WTC11 (cell line): ENCODE measurements at regions of chr22 and their contacts with region 1.

Region 1: DNA sequence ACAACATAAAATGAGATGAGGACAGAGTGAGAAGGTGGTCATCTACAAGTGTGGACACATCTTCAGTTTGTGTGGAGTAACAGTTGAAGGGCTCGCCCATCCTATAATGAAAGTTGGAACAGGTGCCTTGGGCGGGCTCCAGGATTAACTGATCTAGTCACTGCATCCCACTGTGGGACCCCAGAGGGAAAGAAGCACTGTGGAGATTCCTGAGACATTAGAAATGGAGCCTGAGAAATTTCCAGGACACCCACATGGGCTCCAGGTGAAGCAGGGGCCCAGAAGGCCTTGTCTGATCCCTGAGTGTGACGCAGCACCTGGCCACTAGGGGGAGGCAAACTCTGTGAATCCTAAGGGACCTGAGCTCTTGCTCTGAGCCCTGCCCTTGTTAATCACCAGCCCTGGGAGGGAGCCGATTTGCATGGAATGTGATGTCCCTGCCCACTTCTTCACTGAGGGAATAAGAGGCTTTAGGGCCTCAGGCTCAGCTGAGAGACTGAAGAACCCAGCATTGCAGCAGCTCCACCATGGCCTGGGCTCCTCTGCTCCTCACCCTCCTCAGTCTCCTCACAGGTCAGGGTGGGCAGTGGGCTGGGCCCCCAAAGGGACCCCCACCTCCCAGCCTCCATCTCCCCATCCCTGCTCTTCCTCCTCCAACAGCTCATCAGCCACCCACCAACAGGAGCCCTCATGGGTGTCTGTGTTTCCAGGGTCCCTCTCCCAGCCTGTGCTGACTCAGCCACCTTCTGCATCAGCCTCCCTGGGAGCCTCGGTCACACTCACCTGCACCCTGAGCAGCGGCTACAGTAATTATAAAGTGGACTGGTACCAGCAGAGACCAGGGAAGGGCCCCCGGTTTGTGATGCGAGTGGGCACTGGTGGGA is 98.4 kb downstream of the VPREB1 start:
- DNase-seq: peak; percentile 98
- ATAC-seq: peak; percentile 99
- H3K4me3 Mint-ChIP-seq: no peak overlapping the region
- H3K27ac Mint-ChIP-seq: no peak overlapping the region
- H3K4me1 Mint-ChIP-seq: peaks cover 4% of the 10 kb centered on the region
- H3K27me3 Mint-ChIP-seq: peaks cover 100% of the 10 kb centered on the region
- CTCF ChIP-seq: peak; percentile 87

Region 2: DNA sequence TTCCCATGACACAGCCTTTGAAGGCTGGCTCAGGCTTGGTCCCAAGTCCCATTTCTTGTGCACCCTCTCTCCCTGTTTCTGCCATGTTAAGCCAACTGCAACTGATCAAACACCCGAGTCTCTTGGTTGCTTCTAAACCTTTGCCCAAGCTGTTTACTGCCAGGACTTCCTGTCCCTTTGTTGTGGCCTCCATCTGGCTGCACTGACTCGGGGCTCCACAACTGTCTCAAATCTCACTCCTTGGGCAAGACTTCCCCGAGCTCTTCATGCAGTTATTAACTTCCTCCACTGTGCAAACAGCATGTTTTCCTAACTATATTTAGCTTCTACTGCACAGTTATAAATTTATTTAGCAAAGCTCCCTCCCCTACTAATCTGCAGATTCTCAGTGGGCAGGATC is 94.1 kb before region 1 on chr22:
- CTCF ChIA-PET with region 1: no interaction called
- POLR2A ChIA-PET with region 1: no interaction called
- DNase-seq: no peak
- ATAC-seq: no peak
- H3K4me3 Mint-ChIP-seq: no peak overlapping the region
- H3K27ac Mint-ChIP-seq: no peak overlapping the region
- H3K4me1 Mint-ChIP-seq: no peaks in the 10 kb centered on the region
- H3K27me3 Mint-ChIP-seq: peaks cover 74% of the 10 kb centered on the region
- CTCF ChIP-seq: no peak

Region 3: GRCh38 chr22:22318723-22319465 is 24.0 kb before region 1 on chr22:
- CTCF ChIA-PET with region 1: interaction called, 18 read pairs
- POLR2A ChIA-PET with region 1: interaction called, 3 read pairs
- DNase-seq: no peak
- ATAC-seq: no peak
- H3K4me3 Mint-ChIP-seq: no peak overlapping the region
- H3K27ac Mint-ChIP-seq: no peak overlapping the region
- H3K4me1 Mint-ChIP-seq: peaks cover 26% of the 10 kb centered on the region
- H3K27me3 Mint-ChIP-seq: peaks cover 98% of the 10 kb centered on the region
- CTCF ChIP-seq: no peak

Region 4: GRCh38 chr22:22357024-22357883 is 14.3 kb after region 1 on chr22:
- CTCF ChIA-PET with region 1: interaction called, 20 read pairs
- POLR2A ChIA-PET with region 1: no interaction called
- DNase-seq: peak; percentile 94
- ATAC-seq: peak; percentile 93
- H3K4me3 Mint-ChIP-seq: peak overlapping the region; percentile 44
- H3K27ac Mint-ChIP-seq: no peak overlapping the region
- H3K4me1 Mint-ChIP-seq: peaks cover 5% of the 10 kb centered on the region; the same call in 1 of the 2 replicates
- H3K27me3 Mint-ChIP-seq: peaks cover 100% of the 10 kb centered on the region
- CTCF ChIP-seq: peak; percentile 80

Region 5: DNA sequence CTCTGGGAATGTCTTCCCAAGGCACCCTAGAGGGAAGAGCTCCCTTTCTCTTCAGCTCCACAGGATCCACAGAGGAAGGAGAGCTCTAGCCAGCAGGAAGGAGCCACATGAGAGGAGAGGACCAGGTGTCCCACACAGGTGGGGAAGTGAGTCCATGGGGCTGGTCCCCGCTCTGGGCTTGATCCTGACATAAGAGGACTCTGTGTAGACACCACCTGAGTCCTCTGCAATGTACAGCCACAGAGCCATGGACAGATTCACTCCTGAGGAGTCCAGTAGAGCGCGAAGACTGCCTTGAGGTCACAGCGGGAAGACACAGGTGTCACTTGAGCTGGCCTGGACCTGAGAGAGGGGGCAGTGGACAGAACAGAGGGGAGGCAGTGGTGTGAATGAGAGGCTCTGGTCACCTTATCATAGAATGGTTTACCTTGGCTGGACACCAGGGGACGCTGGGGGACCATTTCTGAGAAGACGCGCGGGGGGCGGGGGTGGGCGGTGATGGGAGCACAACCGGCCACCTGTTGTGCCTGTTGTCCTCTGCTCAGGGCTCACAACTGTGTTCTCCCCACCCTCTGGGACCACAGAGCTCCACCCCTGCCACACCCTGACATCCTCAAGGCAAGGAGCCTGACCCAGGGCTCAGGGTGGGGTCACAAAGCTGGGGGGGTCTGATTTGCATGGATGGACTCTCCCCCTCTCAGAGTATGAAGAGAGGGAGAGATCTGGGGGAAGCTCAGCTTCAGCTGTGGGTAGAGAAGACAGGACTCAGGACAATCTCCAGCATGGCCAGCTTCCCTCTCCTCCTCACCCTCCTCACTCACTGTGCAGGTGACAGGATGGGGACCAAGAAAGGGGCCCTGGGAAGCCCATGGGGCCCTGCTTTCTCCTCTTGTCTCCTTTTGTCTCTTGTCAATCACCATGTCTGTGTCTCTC is 37.4 kb after region 1 on chr22:
- CTCF ChIA-PET with region 1: interaction called, 15 read pairs
- POLR2A ChIA-PET with region 1: no interaction called
- DNase-seq: peak; percentile 72
- ATAC-seq: peak; percentile 81
- H3K4me3 Mint-ChIP-seq: no peak overlapping the region
- H3K27ac Mint-ChIP-seq: no peak overlapping the region
- H3K4me1 Mint-ChIP-seq: no peaks in the 10 kb centered on the region
- H3K27me3 Mint-ChIP-seq: peaks cover 100% of the 10 kb centered on the region
- CTCF ChIP-seq: 0 out of 2 replicates have a peak, but pooled peaks have one; percentile 24